ENCODE measurements at regions of chr5 and their contacts with region 1.

Region 1: DNA sequence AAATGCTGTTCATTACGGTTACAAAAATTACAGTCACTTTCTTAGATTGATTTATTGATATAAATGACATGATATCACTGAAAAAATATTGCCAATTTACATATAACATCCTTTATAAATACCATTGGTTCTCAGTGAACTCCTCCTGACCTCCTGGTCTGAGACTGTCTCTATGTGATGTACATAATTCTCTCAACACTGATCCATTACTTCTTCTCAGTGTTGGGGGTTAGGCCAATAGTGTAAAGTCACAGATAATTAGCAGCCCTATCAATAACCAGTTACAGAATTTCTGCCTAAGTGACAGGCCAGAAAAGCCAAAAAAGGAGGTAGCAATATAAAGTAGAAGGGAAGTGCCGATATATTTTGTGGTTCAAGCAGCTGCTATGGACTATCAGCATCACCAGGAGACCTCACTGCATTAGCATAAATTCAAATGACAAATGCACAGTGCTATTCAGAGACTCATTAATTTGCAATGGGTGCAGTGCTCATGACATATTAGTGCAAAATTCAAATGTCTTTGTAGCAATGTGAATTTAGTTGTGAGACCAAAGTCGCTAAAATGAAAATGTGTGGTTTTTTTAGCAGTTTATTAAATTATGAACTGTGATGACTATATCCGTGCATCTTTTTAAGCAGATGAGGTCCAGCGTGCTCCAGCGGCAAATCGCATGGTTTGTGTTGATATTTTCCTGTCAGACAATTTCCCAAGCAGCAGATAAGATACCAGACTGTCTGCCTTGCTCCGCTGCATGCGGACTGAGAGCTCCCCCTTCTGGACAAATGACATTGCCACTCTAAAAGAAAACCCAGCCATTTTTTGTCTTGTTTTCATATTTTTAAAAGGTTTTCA is 144.6 kb downstream of the CETN3 start:
- DNase-seq: peak; percentile 35 to 53 (median 50)
- ATAC-seq: no peak
- H3K4me3 ChIP-seq: no peak overlapping the region
- H3K27ac ChIP-seq: no peak overlapping the region
- H3K4me1 ChIP-seq: no peaks in the 10 kb centered on the region
- H3K27me3 ChIP-seq: no peaks in the 10 kb centered on the region
- CTCF ChIP-seq: peak; percentile 80 to 94 (median 84)
- POLR2A ChIP-seq: no peak

Region 2: DNA sequence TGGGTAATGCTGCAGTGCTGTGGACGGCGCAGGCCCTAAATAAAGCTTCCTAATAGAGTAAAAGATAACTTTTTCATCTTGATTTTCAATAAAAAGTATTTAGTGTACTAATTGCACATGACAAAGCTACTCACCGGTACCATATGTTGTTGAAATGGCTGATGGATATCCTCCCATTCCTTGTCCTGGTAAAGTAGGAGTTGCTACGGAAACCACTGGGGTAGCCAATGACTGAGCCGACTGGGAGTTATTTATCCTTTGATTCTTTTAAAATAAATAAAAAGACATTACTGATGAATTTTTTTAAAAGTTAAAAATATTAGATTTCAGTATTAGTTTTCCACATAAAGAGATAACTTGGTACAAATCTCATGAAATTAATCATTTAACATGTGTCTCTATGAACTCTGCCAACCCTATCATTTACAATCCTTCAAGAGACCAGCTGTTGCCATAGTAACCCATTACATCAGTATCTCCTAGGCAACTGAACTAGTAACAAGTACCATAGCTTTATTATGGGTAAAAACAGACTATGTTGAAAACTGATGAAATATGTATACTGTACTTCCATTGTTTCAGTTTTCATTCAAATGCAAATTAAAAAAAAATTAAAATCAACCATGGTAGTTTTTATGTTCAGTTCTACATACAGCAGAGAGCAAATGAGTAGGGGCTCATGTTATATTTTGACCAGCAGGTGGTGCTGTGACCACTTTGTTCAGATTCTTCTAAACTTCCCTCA is 1535.7 kb before region 1 on chr5:
- intact Hi-C with region 1: loop called (anchors 10 kb)
- DNase-seq: peak; percentile 68 to 79 (median 75)
- ATAC-seq: peak; percentile 85
- H3K4me3 ChIP-seq: no peak overlapping the region
- H3K27ac ChIP-seq: no peak overlapping the region
- H3K4me1 ChIP-seq: no peaks in the 10 kb centered on the region
- H3K27me3 ChIP-seq: no peaks in the 10 kb centered on the region
- CTCF ChIP-seq: peak; percentile 36 to 85 (median 74)
- POLR2A ChIP-seq: no peak